Common myeloid progenitor, CD34-positive (primary cell): ENCODE measurements at regions of chr15 and their contacts with region 1.

Region 1: DNA sequence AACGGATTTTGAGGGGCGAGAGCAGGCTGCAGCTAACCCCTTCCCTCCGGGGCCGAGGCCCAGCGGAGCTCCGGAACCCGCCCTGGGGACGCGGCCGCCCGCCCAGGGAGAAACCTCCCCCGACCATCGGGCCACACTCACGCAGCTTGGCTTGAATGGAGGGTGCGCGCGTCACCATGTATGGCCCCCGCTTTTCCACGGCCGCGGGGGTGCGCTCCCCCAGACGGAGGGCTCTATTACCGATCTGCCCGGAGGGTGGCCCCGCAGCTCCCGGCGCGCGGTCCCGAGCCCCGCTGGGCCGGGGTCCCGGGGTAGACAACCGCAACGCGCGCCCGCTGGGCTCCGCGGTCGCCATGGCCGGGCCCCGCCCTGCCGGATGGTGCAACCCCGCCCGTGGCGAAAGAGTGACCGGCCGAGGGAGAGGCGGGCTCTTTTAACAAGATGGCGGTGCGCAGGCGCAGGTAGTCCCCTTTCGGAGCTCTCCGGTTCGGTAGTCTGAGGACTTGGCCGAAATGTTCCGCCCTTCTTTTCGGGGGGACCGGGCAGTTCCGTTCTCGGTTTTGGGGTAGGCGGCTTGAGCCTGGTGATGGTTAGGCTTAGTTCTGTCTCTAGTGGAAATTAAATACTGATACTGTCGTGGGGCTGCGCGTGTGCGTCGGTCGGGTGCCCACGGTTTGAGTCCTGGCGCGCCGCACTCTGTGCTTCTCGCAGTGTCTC is at the start of gene FAM219B:
- DNase-seq: peak; percentile 65 to 83 (median 83)
- H3K4me3 ChIP-seq: peak within 1 kb of the TSS; percentile 83 to 92 (median 89)
- H3K27ac ChIP-seq: peak within 1 kb of the TSS; percentile 72 to 88
- H3K4me1 ChIP-seq: peaks cover 16 to 50% (median 40%) of the 10 kb centered on the region in 4 experiments
- H3K27me3 ChIP-seq: no peaks in the 10 kb centered on the region

Region 2: GRCh38 chr15:74768771-74769342 is 137.7 kb before region 1 on chr15:
- CTCF ChIA-PET with region 1: interaction called, 16 read pairs
- POLR2A ChIA-PET with region 1: interaction called, 6 read pairs
- DNase-seq: peak in 2 of 3 donors; percentile 68 to 69
- H3K4me3 ChIP-seq: peak overlapping the region in 2 of 7 experiments; percentile 26 to 48
- H3K27ac ChIP-seq: no peak overlapping the region
- H3K4me1 ChIP-seq: peaks cover 0 to 34% (median 16%) of the 10 kb centered on the region in 4 experiments
- H3K27me3 ChIP-seq: peaks cover 0 to 4% (median 0%) of the 10 kb centered on the region in 5 experiments

Region 3: DNA sequence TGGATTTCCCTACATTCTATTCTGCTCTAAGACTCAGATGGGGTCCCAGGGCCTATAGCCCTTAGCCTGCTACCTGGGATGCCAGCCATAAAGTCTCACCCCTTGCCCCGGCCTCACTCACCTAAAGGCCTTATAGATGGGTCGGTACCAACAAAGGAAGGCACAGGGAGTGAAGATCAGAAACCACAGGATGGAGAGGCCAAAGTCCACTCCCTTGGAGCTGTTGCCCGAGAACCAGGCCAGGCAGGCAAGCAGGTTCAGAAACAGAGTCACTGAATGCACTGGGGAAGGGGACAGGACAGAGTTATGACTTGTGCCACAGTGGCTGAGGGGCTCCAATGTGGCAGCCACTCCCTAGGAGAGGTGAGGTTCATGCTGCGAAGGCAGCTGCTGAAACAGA is 56.2 kb before region 1 on chr15:
- CTCF ChIA-PET with region 1: interaction called, 130 read pairs
- POLR2A ChIA-PET with region 1: no interaction called
- DNase-seq: no peak
- H3K4me3 ChIP-seq: no peak overlapping the region
- H3K27ac ChIP-seq: no peak overlapping the region
- H3K4me1 ChIP-seq: peaks cover 0 to 8% (median 7%) of the 10 kb centered on the region in 4 experiments
- H3K27me3 ChIP-seq: no peaks in the 10 kb centered on the region

Region 4: GRCh38 chr15:74868059-74868458 is 38.5 kb before region 1 on chr15:
- CTCF ChIA-PET with region 1: interaction called, 67 read pairs
- POLR2A ChIA-PET with region 1: interaction called, 23 read pairs
- DNase-seq: peak; percentile 88 to 94 (median 92)
- H3K4me3 ChIP-seq: peak overlapping the region in 5 of 7 experiments; percentile 9 to 64 (median 43)
- H3K27ac ChIP-seq: peak overlapping the region; percentile 33 to 98
- H3K4me1 ChIP-seq: peaks cover 40 to 92% (median 88%) of the 10 kb centered on the region in 4 experiments
- H3K27me3 ChIP-seq: no peaks in the 10 kb centered on the region

Region 5: GRCh38 chr15:74884428-74885223 is 22.0 kb before region 1 on chr15:
- CTCF ChIA-PET with region 1: interaction called, 35 read pairs
- POLR2A ChIA-PET with region 1: interaction called, 6 read pairs
- DNase-seq: no peak
- H3K4me3 ChIP-seq: no peak overlapping the region
- H3K27ac ChIP-seq: no peak overlapping the region
- H3K4me1 ChIP-seq: peaks cover 0 to 34% (median 19%) of the 10 kb centered on the region in 4 experiments
- H3K27me3 ChIP-seq: no peaks in the 10 kb centered on the region

Region 6: DNA sequence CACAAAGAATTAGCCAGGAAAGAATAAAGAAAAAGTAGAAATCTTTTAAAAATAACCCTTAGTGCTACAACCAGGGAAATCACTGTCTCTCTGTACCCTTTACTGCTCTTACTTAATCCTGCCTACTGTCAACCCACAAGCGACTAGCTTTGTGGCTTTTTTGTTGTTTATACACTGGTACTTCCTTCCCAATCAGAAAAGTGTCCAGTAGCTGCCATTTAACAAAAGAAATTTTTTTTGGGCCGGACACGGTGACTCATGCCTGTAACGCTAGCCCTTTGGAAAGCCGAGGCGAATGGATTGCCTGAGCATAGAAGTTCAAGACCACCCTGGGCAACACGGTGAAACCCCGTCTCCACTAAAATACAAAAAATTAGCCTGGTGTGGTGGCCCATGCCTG is 13.9 kb after region 1 on chr15:
- CTCF ChIA-PET with region 1: interaction called, 8 read pairs
- POLR2A ChIA-PET with region 1: interaction called, 12 read pairs
- DNase-seq: peak in 2 of 3 donors; percentile 71 to 74
- H3K4me3 ChIP-seq: no peak overlapping the region
- H3K27ac ChIP-seq: peak overlapping the region; percentile 16 to 19
- H3K4me1 ChIP-seq: peaks cover 0 to 11% (median 2%) of the 10 kb centered on the region in 4 experiments
- H3K27me3 ChIP-seq: no peaks in the 10 kb centered on the region

Region 7: DNA sequence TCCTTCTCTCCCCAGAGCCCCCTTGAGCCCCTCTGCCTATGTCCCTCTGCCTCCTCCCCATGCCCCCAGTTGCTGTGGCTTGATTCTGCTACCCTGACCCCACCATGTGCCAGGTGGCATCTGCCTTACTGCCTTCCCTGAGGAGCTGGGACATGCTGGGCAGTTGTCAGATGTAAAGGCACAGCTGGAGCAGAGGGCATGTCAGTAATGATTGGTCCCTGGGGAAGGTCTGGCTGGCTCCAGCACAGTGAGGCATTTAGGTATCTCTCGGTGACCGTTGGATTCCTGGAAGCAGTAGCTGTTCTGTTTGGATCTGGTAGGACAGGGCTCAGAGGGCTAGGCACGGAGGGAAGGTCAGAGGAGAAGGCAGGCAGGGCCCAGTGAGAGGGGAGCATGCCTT is 113.3 kb after region 1 on chr15:
- CTCF ChIA-PET with region 1: no interaction called
- POLR2A ChIA-PET with region 1: no interaction called
- DNase-seq: no peak
- H3K4me3 ChIP-seq: no peak overlapping the region
- H3K27ac ChIP-seq: no peak overlapping the region
- H3K4me1 ChIP-seq: peaks cover 2 to 41% (median 23%) of the 10 kb centered on the region in 4 experiments
- H3K27me3 ChIP-seq: no peaks in the 10 kb centered on the region